ENCODE measurements at regions of chr4 and their contacts with region 1.

Region 1: DNA sequence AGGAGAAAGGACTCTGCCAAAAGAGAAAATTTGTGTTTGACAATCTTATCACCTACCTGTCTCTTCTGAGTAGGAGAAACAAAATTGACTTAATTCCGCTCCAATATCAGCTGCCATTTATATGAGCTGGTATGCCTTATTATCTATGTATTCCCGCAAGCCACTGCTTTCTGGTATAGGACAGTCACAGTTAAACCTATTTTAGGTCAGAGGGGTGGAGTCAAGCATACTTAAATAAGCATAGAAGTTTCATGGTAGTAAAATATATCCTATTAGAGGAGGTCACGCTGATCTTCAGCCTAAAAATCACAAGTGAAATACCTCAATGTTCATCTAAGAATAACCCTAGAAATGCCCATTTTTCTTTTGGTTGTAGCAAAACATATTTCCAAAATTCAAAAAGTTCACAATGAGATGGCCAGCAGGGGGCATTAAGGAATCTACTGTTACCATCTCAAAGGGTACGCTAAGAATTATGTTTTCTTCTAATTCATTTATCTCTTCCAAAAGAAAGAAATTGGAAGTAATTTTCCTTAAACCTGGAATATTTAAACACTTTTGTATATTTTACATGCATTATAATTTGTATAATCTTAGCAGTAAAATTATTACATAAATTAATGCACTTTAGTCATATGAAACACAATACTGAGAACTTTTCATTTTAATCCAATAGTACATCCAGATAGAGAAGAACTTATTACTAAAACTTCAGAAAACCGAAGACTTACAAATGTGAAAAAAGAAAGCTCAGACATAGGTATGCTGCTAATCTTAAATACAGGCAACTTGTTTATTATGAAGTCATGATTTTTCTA is 10.5 kb downstream of the PPAT start:
- DNase-seq: peak; percentile 44
- H3K4me3 ChIP-seq: no peak overlapping the region
- H3K27ac ChIP-seq: no peak overlapping the region
- H3K4me1 ChIP-seq: no peaks in the 10 kb centered on the region
- H3K27me3 ChIP-seq: no peaks in the 10 kb centered on the region
- CTCF ChIP-seq: peak; percentile 65

Region 2: DNA sequence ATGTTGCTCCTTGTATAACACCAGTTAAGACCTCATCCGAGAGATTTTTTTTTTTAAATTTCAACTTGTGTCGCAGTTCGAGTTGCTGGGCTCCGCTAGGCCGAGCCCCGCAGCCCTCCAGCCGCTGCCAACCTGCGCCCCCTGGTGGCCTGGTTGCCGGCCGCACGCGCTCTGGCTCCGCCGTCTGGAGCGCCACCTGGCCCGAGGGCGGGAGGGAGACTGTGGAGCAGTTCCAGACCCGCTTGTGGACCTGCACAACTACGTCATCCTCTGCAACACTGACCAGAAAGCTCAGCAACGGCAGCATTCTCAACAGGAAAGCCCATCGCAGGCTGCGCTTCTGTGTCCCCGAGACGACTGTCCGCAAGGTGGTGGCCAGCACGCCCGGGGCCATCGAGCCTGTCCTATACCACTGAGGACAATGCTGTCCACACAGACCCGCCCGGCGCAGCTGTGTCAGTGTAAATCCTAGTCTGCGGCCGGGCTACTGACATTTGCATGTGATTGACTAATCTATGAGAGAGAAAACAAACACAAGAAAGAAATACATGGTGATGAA is 119.7 kb after region 1 on chr4:
- intact Hi-C with region 1: loop called (anchors 5 kb)
- DNase-seq: peak; percentile 86
- H3K4me3 ChIP-seq: peak overlapping the region; percentile 4
- H3K27ac ChIP-seq: no peak overlapping the region
- H3K4me1 ChIP-seq: no peaks in the 10 kb centered on the region
- H3K27me3 ChIP-seq: no peaks in the 10 kb centered on the region
- CTCF ChIP-seq: peak; percentile 99

Region 3: GRCh38 chr4:56828784-56829535 is 404.1 kb after region 1 on chr4:
- intact Hi-C with region 1: loop called (anchors 10 kb)
- DNase-seq: no peak
- H3K4me3 ChIP-seq: no peak overlapping the region
- H3K27ac ChIP-seq: no peak overlapping the region
- H3K4me1 ChIP-seq: no peaks in the 10 kb centered on the region
- H3K27me3 ChIP-seq: no peaks in the 10 kb centered on the region
- CTCF ChIP-seq: no peak

Measured in colonic mucosa (tissue), 4 donors.